ENCODE measurements at regions of chr6 and their contacts with region 1.

Region 1: DNA sequence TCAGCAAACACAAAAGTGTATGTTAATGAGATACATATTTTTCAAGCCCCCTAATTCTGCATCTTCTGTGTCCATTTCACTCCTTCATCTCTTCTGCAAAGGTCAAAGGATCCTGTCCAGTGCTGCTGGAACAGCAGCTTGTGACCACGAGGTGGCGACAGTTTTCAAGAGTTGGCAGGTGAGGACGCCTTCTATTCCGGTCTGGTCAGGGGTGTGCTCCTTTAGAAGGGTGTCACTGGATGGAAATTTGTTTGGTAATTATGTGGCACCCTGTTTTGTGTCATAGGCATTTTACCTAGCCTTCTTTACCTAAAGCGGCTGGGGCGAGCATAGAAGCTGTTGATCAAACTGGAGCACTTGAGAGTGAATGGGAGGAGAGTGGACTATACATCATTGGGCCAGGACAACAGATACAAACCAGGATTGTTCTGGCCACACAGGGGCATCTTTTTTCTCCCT is 32.9 kb upstream of the ERVFRD-1 start:
- DNase-seq: no peak
- H3K4me3 ChIP-seq: no peak overlapping the region
- CTCF ChIP-seq: peak; percentile 86

Region 2: GRCh38 chr6:11132194-11132888 is 12.1 kb before region 1 on chr6:
- CTCF ChIA-PET with region 1: interaction called, 18 read pairs
- POLR2A ChIA-PET with region 1: no interaction called
- DNase-seq: no peak
- H3K4me3 ChIP-seq: no peak overlapping the region
- CTCF ChIP-seq: no peak

Region 3: GRCh38 chr6:11232193-11232769 is 87.9 kb after region 1 on chr6 and contains the start of gene NEDD9:
- CTCF ChIA-PET with region 1: interaction called, 10 read pairs
- POLR2A ChIA-PET with region 1: no interaction called
- DNase-seq: peak; percentile 79
- H3K4me3 ChIP-seq: peak within 1 kb of the TSS; percentile 85
- CTCF ChIP-seq: no peak

Region 4: DNA sequence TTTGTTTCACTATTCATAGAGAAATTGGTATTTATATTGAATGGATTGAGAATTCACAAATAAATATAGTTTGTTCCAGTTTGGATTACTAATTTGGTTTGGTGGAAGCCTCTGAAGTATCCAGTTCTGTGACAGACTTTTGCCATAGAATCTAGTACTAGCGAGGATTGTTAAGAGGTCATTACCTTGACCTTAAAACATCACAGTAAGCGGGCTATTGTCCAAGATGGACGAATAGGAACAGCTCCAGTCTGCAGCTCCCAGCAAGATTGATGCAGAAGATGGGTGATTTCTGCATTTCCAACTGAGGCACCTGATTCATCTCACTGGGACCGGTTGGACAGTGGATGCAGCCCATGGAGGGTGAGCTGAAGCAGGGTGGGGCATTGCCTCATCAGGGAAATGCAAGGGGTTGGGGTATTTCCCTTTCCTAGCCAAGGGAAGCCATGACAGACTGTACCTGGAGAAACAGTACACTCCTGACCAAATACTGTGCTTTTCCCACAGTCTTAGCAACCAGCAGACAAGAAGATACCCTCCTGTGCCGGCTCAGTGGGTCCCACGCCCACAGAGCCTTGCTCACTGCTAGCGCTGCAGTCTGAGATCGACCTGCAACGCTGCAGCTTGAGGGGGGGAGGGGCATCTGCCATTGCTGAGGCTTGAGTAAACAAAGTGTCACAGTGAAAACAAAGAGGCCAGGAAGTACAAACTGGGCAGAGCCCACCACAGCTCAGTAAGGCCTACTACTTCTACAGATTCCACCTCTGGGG is 154.4 kb after region 1 on chr6:
- CTCF ChIA-PET with region 1: no interaction called
- POLR2A ChIA-PET with region 1: no interaction called
- DNase-seq: no peak
- H3K4me3 ChIP-seq: no peak overlapping the region
- CTCF ChIP-seq: no peak

Region 5: DNA sequence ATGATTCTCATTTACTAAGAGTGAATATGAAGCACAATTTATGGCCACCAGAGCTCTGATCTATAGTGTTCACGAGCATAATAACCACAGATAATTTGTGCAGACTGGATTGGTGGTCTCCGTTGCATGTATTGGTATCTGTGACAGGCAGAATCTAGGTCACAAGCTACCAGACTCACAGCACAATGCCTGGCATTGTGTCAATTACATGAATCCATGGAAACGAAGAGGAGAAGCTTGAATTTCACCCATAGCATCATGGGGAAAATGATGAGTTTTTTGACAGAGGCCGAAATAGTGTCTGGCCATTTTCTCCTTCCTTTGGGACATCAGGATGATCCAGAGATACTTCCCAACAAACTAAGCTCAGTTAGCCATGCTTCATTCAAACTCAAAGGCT is 340.8 kb after region 1 on chr6:
- CTCF ChIA-PET with region 1: interaction called, 10 read pairs
- POLR2A ChIA-PET with region 1: no interaction called
- DNase-seq: no peak
- H3K4me3 ChIP-seq: no peak overlapping the region
- CTCF ChIP-seq: no peak

Measured in AG04449 (cell line).